Activated CD4-positive, alpha-beta T cell treated with anti-CD3 and anti-CD28 coated beads for 36 hours (primary cell): ENCODE measurements at regions of chr5 and their contacts with region 1.

Region 1: GRCh38 chr5:144191998-144192397 is 21.3 kb downstream of the KCTD16 start:
- DNase-seq: peak; percentile 19
- ATAC-seq: peak; percentile 74
- H3K4me3 Mint-ChIP-seq: no peak overlapping the region
- H3K27ac Mint-ChIP-seq: no peak overlapping the region
- H3K4me1 Mint-ChIP-seq: peaks cover 22% of the 10 kb centered on the region
- H3K27me3 Mint-ChIP-seq: no peaks in the 10 kb centered on the region

Region 2: DNA sequence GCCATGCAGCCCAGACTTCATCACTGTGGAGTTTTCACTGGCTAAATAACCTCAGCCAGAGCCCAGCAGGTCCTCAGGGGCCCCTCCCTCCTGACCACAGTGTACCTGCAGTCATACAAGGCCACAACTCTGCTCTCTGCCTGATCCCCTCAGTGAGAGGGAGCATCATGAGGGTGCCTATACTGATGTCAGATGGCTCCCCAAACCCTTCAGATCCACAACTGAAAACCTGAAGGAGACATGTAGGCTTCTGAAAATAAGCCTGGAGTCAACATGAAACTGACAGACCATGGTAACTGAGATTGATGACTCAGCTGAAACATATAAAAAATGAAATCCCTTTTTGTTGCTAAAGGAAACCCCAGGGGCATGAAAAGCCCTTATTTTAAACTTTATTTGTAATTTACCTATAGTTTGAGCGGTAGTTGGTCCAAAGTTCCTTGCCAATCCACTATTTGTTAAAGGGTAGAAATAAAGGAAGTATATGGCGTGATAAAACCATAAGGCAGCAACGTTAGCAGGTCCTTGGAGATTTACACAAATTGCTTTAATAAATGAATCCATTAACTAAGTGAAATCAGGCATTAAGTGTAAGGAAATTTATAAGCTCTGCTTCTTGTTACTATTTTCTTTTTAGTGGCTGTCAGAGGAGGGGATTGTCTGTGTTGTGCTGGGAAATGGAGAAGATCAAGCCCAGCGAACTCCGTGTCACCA is 1574.4 kb before region 1 on chr5:
- CTCF ChIA-PET with region 1: no interaction called
- POLR2A ChIA-PET with region 1: no interaction called
- intact Hi-C with region 1: loop called in 1 of 2 experiments (anchors 2 kb)
- DNase-seq: peak; percentile 56
- ATAC-seq: peak; percentile 90
- H3K4me3 Mint-ChIP-seq: no peak overlapping the region
- H3K27ac Mint-ChIP-seq: no peak overlapping the region
- H3K4me1 Mint-ChIP-seq: peaks cover 19% of the 10 kb centered on the region
- H3K27me3 Mint-ChIP-seq: peaks cover 15% of the 10 kb centered on the region

Region 3: DNA sequence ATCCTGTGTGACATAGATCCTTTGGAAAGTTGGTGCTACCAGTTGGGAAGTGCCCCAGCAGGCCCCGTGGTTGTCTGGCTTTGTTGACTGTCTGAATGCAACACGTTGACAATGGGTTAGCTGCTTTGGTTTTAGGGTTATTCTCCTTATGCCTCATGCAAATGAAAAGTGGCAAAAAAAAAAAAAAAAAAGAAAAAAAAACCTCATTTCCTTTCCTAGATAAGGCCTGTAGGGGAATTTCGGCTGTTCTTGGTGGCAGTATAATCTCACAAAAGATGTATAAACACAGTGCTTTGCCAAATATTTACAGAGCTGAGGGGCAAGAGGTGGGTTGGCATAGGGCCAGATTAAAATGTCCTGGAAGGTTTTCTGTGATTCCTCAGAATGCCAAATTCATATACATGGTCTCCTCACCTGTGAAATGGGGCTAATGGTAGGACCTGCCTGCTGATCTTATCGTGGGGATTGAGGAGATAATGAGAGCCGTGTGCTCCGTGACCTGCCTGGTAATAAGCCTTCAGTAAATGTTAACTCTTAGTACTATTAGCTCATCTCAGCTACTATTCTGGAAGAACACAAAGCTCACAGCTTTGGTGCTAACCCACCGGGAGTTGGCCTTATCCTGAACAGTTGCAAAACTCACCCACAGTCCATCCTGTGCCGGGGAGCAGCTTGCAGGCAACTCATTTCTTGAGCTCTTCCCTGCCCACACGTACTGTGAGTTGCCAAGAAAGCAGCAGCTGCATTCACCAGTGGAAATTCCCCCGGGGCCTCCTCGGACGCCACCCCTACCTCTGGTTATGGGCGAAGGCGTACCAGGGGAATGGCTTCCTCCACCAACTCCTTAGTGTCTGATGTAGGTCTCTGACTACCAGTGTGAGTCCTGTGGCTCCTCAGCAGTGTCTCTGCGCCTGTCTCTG is 1008.8 kb before region 1 on chr5:
- CTCF ChIA-PET with region 1: no interaction called
- POLR2A ChIA-PET with region 1: no interaction called
- intact Hi-C with region 1: loop called in 1 of 2 experiments (anchors 10 kb)
- DNase-seq: peak; percentile 84
- ATAC-seq: peak; percentile 79
- H3K4me3 Mint-ChIP-seq: peak overlapping the region; percentile 9
- H3K27ac Mint-ChIP-seq: peak overlapping the region; percentile 79
- H3K4me1 Mint-ChIP-seq: peaks cover 47% of the 10 kb centered on the region
- H3K27me3 Mint-ChIP-seq: no peaks in the 10 kb centered on the region

Region 4: GRCh38 chr5:144170276-144171024 is 21.5 kb before region 1 on chr5 and contains the starts of genes KCTD16 and YIPF5:
- CTCF ChIA-PET with region 1: interaction called, 37 read pairs
- POLR2A ChIA-PET with region 1: interaction called, 5 read pairs
- intact Hi-C with region 1: loop called (anchors 1 kb)
- DNase-seq: peak; percentile 98
- ATAC-seq: peak; percentile 98
- H3K4me3 Mint-ChIP-seq: peak within 1 kb of the TSS; percentile 99
- H3K27ac Mint-ChIP-seq: peak within 1 kb of the TSS; percentile 96
- H3K4me1 Mint-ChIP-seq: peaks cover 43% of the 10 kb centered on the region
- H3K27me3 Mint-ChIP-seq: no peaks in the 10 kb centered on the region
- total RNA-seq, gene KCTD16: 0.14 to 0.25 TPM
- total RNA-seq, gene YIPF5: 39.1 to 44.2 TPM

Region 5: GRCh38 chr5:145946112-145946861 is 1754.3 kb after region 1 on chr5:
- CTCF ChIA-PET with region 1: interaction called, 3 read pairs
- POLR2A ChIA-PET with region 1: no interaction called
- intact Hi-C with region 1: loop called (anchors 2 to 10 kb)
- DNase-seq: peak; percentile 37
- ATAC-seq: peak; percentile 81
- H3K4me3 Mint-ChIP-seq: no peak overlapping the region
- H3K27ac Mint-ChIP-seq: no peak overlapping the region
- H3K4me1 Mint-ChIP-seq: peaks cover 32% of the 10 kb centered on the region
- H3K27me3 Mint-ChIP-seq: peaks cover 47% of the 10 kb centered on the region